ENCODE measurements at regions of chr5 and their contacts with region 1.

Region 1: GRCh38 chr5:147576646-147577535 is 67.0 kb upstream of the DPYSL3 start:
- DNase-seq: peak; percentile 44
- H3K4me3 Mint-ChIP-seq: no peak overlapping the region
- H3K27ac Mint-ChIP-seq: no peak overlapping the region
- H3K4me1 Mint-ChIP-seq: no peaks in the 10 kb centered on the region
- H3K27me3 Mint-ChIP-seq: no peaks in the 10 kb centered on the region

Region 2: DNA sequence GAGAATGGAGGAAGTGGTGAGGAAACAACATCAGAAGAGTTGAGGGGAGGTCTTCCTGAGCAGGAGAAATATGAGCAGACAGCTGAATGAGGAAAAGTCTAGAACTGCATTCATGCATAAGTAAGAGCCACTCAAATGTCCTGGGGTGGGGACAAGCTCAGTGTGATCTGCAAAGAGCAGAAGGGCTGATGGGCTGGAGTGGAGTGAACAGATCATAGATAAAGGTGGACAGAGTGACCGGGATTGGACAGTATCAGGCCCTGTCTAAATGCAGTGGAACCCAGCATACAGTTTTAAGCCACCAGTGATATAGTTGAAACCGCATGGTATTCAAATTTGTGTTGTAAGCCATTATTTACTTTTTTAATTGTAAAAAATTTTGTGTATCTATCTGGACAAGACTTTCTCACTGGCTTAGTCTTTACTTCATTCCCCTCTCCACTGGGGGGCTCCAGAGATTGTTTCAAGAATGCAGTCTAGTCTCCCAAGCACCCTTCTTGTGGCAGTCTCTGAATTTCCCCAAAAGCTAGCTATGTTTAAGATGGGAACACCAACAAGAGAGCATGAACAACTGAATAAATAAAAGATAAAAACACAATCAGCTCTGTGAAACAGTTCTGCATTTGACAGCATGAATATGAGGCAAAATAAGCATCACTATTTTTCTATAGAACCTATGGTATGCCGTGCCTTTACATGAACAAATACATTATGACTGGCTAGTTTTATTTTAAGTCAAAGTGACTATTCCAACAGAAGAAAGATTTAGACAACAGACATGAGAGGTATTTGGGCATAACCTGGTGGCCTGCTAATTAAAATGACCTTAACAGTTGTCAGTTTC is 352.7 kb before region 1 on chr5:
- CTCF ChIA-PET with region 1: no interaction called
- POLR2A ChIA-PET with region 1: no interaction called
- intact Hi-C with region 1: loop called (anchors 5 kb)
- DNase-seq: no peak
- H3K4me3 Mint-ChIP-seq: no peak overlapping the region
- H3K27ac Mint-ChIP-seq: no peak overlapping the region
- H3K4me1 Mint-ChIP-seq: peaks cover 4% of the 10 kb centered on the region
- H3K27me3 Mint-ChIP-seq: no peaks in the 10 kb centered on the region

Region 3: DNA sequence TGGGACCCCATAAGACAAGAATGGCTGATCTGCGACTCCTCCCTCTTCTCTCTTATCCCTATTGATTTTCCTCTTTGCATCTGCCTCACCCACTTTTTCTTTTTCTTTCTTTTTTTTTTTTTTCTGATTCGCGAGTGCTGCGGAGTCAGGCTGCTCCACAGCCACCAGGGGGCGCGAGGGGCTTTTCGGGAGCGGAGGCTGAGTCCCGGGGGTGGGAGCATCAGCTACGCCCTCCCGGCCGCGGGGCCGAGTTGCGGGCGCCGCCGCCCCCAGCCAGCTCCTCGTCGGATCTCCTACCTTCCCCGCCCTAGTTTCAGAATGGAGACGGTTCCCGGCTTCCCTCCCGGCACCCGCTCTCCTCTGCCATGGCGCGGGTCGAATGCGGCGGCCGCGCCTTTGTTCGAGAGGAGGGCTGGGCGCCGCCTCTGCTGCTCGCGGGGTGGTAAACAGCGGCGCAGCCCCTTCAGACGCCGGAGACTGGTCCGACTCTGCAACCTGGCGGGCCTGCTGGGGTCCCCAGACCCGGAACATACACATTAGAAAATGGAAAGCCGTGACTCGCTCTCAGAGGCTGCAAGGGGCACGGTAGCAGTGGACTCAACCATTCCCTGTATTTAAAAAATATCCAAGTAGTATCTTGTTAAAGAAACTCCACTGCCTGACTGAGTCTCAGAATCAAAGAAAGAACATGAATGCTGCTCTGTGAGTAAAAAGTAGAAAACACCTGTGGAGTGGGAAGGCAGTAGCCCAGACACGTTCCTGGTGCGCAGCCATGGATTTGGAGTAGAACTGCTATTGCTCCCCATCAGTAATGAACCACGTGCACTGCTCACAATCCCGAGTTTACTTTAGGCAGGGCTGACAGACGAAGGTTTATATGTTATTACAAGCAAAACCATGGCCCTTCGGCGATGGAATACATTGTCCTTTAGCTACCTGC is 122.7 kb before region 1 on chr5:
- CTCF ChIA-PET with region 1: no interaction called
- POLR2A ChIA-PET with region 1: no interaction called
- intact Hi-C with region 1: loop called (anchors 2 kb)
- DNase-seq: peak; percentile 68
- H3K4me3 Mint-ChIP-seq: peak overlapping the region; percentile 72
- H3K27ac Mint-ChIP-seq: no peak overlapping the region
- H3K4me1 Mint-ChIP-seq: peaks cover 9% of the 10 kb centered on the region
- H3K27me3 Mint-ChIP-seq: peaks cover 65% of the 10 kb centered on the region

Region 4: GRCh38 chr5:147805030-147805454 is 228.2 kb after region 1 on chr5:
- CTCF ChIA-PET with region 1: no interaction called
- POLR2A ChIA-PET with region 1: no interaction called
- intact Hi-C with region 1: no loop called
- DNase-seq: no peak
- H3K4me3 Mint-ChIP-seq: no peak overlapping the region
- H3K27ac Mint-ChIP-seq: no peak overlapping the region
- H3K4me1 Mint-ChIP-seq: no peaks in the 10 kb centered on the region
- H3K27me3 Mint-ChIP-seq: peaks cover 3% of the 10 kb centered on the region

Measured in activated CD4-positive, alpha-beta memory T cell treated with anti-CD3 and anti-CD28 coated beads for 36 hours (primary cell).